HEK293 (cell line): ENCODE measurements at regions of chr12 and their contacts with region 1.

Region 1: GRCh38 chr12:64636856-64637255 is 26.6 kb downstream of the RASSF3 start:
- H3K4me3 ChIP-seq: no peak overlapping the region
- H3K27ac ChIP-seq: no peak overlapping the region
- H3K4me1 ChIP-seq: peaks cover 16% of the 10 kb centered on the region
- CTCF ChIP-seq: no peak

Region 2: DNA sequence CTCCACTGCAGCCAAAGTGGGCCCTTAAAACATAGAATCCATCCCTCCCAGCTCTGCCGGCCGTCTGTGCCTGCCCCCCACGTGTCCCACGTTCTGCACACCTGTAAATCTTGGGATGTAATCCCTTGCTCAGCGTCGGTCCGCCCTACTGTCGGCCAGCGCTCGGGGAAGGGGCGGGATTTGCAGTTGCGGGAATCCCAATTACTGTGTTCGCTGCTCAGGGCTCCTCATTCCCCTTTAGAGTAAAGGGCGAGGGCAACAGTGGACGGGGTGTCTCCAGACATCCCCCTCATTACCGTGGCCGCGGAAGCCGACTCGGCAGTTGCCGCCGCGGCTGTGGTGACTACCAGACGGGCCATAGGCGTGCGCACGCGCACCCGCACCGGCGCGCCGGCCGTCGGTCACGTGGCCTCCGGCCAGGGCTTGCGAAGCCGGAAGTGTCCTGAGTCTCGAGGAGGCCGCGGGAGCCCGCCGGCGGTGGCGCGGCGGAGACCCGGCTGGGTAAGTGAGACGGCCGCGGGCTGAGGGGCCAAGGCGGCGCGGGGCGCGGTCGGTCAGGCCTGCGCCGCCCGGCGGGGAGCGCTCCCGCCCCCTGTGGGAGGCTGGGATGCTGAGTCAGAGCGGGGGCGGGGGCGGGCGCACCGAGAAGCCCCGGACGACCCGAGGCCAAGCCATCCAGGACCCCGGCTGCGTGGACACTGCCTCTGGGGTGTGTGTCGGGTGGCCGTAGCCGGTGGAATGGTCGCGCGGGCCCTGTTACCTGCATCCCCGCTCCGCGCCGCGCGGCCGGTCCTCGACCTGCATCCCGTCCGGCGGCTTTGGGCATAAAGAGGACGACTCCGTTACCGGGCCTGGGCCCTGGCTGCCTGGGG is 184.9 kb before region 1 on chr12 and contains the start of gene TBK1:
- CTCF ChIA-PET with region 1: no interaction called
- POLR2A ChIA-PET with region 1: interaction called, 10 read pairs
- H3K4me3 ChIP-seq: peak within 1 kb of the TSS; percentile 98
- H3K27ac ChIP-seq: peak within 1 kb of the TSS; percentile 96
- H3K4me1 ChIP-seq: peaks cover 3% of the 10 kb centered on the region
- CTCF ChIP-seq: peak; percentile 73

Region 3: DNA sequence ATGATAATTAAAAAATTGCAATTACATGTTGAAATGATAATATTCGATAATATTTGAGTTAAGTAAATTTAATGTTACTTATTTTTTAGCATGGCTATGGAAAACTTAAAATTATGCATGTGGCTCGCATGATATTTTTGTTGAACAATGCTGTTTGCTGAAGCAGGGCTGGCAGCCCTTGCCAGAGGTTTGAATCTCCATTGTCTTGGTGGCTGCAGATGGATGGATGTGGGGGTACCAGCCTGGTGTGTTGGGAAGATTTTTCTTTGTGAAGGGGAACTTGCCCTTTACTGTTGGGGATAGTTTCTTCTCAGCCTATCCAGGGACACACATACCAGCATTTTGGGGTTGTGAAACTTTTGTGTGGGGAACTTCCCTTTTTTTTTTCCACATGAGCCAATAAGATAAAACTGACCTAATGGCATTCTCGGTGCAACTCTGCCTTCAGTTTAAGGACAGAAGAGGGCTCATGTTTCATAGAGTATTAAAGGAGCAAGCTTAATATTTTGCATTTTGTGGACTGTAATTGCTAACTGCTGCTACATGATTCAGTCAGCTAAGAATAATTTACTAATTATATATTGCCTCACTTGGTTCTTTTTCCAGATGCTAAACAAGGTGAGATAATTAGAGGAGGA is 17.8 kb before region 1 on chr12:
- CTCF ChIA-PET with region 1: no interaction called
- POLR2A ChIA-PET with region 1: no interaction called
- H3K4me3 ChIP-seq: no peak overlapping the region
- H3K27ac ChIP-seq: no peak overlapping the region
- H3K4me1 ChIP-seq: peaks cover 4% of the 10 kb centered on the region; the same call in 1 of the 2 replicates
- CTCF ChIP-seq: no peak

Region 4: DNA sequence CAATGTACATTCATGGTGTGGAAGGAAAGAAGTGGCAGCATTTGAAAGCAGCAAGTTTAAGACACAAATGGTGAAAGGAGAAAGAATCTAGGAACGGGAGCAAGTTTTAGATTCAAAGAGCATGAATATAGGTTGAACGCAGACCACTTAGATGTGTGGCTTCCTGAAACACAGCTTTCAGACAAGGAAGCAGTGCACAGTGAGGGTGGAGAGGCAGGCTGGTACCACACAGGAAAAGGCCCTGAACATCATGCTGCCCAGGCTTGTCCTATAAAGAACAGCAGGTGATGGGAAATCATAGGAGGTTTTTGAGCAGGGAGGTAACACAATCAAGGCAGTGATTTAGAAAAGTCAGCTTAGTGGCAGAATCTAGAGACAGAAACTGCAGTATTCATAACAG is 86.8 kb after region 1 on chr12:
- CTCF ChIA-PET with region 1: no interaction called
- POLR2A ChIA-PET with region 1: no interaction called
- H3K4me3 ChIP-seq: no peak overlapping the region
- H3K27ac ChIP-seq: no peak overlapping the region
- H3K4me1 ChIP-seq: no peaks in the 10 kb centered on the region
- CTCF ChIP-seq: no peak